ENCODE measurements at regions of chr1 and their contacts with region 1.

Region 1: DNA sequence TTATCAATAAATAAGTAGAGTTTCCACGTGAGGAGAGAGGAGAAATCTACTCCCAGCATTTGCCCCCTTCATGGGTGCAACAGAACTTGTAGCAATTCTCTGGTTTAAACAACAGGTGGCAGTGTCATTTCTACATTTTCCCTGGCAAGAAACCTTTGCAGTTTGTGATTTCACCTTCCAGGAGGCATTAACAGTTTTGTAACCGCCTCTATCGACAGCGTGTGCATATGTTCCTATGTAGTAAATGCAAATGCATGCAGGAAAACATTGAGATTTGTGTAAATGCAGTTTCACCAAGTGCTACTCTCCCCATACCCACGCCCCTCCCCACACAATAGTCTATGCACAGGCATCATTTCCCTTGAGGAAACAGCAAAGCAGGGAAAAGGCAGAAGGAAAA is 494.7 kb downstream of the SMYD3 start:
- DNase-seq: peak in 5 of 9 donors; percentile 14 to 30 (median 22)
- ATAC-seq: peak; percentile 50
- H3K4me3 ChIP-seq: no peak overlapping the region
- H3K4me3 Mint-ChIP-seq: no peak overlapping the region
- H3K27ac ChIP-seq: no peak overlapping the region
- H3K27ac Mint-ChIP-seq: peak overlapping the region in 2 of 9 donors; percentile 13 to 49
- H3K4me1 ChIP-seq: no peaks in the 10 kb centered on the region
- H3K4me1 Mint-ChIP-seq: peaks cover 0 to 3% (median 0%) of the 10 kb centered on the region in 7 donors
- H3K27me3 ChIP-seq: no peaks in the 10 kb centered on the region
- H3K27me3 Mint-ChIP-seq: no peaks in the 10 kb centered on the region

Region 2: GRCh38 chr1:246117066-246117791 is 104.9 kb after region 1 on chr1:
- CTCF ChIA-PET with region 1: no interaction called
- POLR2A ChIA-PET with region 1: no interaction called
- intact Hi-C with region 1: loop called (anchors 1 kb)
- DNase-seq: peak in 7 of 9 donors; percentile 66 to 89 (median 83)
- ATAC-seq: peak; percentile 94
- H3K4me3 ChIP-seq: peak overlapping the region; percentile 34
- H3K4me3 Mint-ChIP-seq: peak overlapping the region; percentile 23 to 92 (median 68)
- H3K27ac ChIP-seq: peak overlapping the region; percentile 69
- H3K27ac Mint-ChIP-seq: peak overlapping the region; percentile 11 to 95 (median 87)
- H3K4me1 ChIP-seq: peaks cover 6 to 9% of the 10 kb centered on the region in 2 donors
- H3K4me1 Mint-ChIP-seq: peaks cover 13 to 50% (median 38%) of the 10 kb centered on the region in 7 donors
- H3K27me3 ChIP-seq: no peaks in the 10 kb centered on the region
- H3K27me3 Mint-ChIP-seq: no peaks in the 10 kb centered on the region

Measured in naive thymus-derived CD4-positive, alpha-beta T cell (primary cell).